MCF 10A (cell line): ENCODE measurements at regions of chr10 and their contacts with region 1.

Region 1: DNA sequence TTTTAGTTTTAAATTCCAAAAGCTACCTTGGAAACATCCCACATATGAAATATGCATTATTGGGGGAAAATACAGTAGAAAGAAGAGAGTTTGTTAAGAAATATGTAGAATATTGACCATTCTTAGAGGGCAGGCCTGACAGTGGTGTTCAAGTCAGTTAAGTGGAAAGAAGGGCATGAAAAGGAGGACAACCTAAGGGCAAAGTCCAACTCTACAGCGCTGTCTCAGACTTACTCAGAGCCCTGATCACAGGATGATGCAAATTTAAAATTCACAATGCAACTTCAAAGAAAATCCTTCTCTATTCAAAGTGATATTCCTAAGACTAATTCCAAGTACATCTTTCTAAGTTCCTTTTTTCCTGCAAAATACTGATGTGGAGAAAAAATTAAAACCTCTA is 139.1 kb upstream of the LRRTM3 start:
- DNase-seq: no peak
- H3K4me3 Mint-ChIP-seq: no peak overlapping the region
- H3K27ac Mint-ChIP-seq: no peak overlapping the region
- H3K4me1 Mint-ChIP-seq: peaks cover 10% of the 10 kb centered on the region
- H3K27me3 Mint-ChIP-seq: no peaks in the 10 kb centered on the region
- CTCF ChIP-seq: no peak

Region 2: GRCh38 chr10:66723608-66724400 is 62.9 kb before region 1 on chr10:
- CTCF ChIA-PET with region 1: no interaction called
- POLR2A ChIA-PET with region 1: no interaction called
- intact Hi-C with region 1: no loop called
- DNase-seq: no peak
- H3K4me3 Mint-ChIP-seq: no peak overlapping the region
- H3K27ac Mint-ChIP-seq: no peak overlapping the region
- H3K4me1 Mint-ChIP-seq: no peaks in the 10 kb centered on the region
- H3K27me3 Mint-ChIP-seq: no peaks in the 10 kb centered on the region
- CTCF ChIP-seq: no peak

Region 3: DNA sequence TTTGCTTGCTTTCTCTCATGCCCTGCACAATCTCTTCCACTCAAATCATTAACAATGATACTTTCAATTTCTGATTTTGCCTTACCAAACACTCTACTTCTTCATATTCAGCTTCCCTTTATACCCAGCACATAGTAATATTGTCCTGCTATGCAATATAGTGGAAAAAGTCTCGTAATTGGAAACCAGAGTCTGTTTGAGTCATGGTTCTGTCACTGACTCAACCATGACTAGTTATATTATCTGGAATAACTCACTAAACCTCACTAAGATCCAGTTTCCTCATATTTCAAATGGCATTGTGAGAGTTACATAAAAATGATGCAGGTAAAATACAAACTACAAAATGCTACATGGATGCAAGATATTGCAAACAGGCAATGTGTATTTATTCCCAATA is 40.6 kb after region 1 on chr10:
- CTCF ChIA-PET with region 1: no interaction called
- POLR2A ChIA-PET with region 1: no interaction called
- intact Hi-C with region 1: loop called (anchors 1 kb)
- DNase-seq: peak; percentile 51
- H3K4me3 Mint-ChIP-seq: no peak overlapping the region
- H3K27ac Mint-ChIP-seq: no peak overlapping the region
- H3K4me1 Mint-ChIP-seq: peaks cover 7% of the 10 kb centered on the region
- H3K27me3 Mint-ChIP-seq: no peaks in the 10 kb centered on the region
- CTCF ChIP-seq: no peak